Testis (tissue), 5 donors: ENCODE measurements at regions of chr2 and their contacts with region 1.

Region 1: GRCh38 chr2:208939852-208940251 is 484.0 kb upstream of the MAP2 start:
- DNase-seq: no peak
- H3K4me3 ChIP-seq: no peak overlapping the region
- H3K27ac ChIP-seq: no peak overlapping the region
- H3K4me1 ChIP-seq: no peaks in the 10 kb centered on the region
- H3K27me3 ChIP-seq: no peaks in the 10 kb centered on the region
- CTCF ChIP-seq: no peak
- POLR2A ChIP-seq: no peak

Region 2: GRCh38 chr2:208501206-208501799 is 438.5 kb before region 1 on chr2:
- intact Hi-C with region 1: no loop called
- DNase-seq: no peak
- H3K4me3 ChIP-seq: no peak overlapping the region
- H3K27ac ChIP-seq: no peak overlapping the region
- H3K4me1 ChIP-seq: no peaks in the 10 kb centered on the region
- H3K27me3 ChIP-seq: no peaks in the 10 kb centered on the region
- CTCF ChIP-seq: no peak
- POLR2A ChIP-seq: no peak

Region 3: GRCh38 chr2:208657468-208657867 is 282.4 kb before region 1 on chr2:
- intact Hi-C with region 1: no loop called
- DNase-seq: no peak
- H3K4me3 ChIP-seq: no peak overlapping the region
- H3K27ac ChIP-seq: no peak overlapping the region
- H3K4me1 ChIP-seq: no peaks in the 10 kb centered on the region
- H3K27me3 ChIP-seq: no peaks in the 10 kb centered on the region
- CTCF ChIP-seq: no peak
- POLR2A ChIP-seq: no peak

Region 4: GRCh38 chr2:208708486-208708885 is 231.4 kb before region 1 on chr2:
- intact Hi-C with region 1: no loop called
- DNase-seq: no peak
- H3K4me3 ChIP-seq: no peak overlapping the region
- H3K27ac ChIP-seq: no peak overlapping the region
- H3K4me1 ChIP-seq: no peaks in the 10 kb centered on the region
- H3K27me3 ChIP-seq: no peaks in the 10 kb centered on the region
- CTCF ChIP-seq: no peak
- POLR2A ChIP-seq: no peak

Region 5: DNA sequence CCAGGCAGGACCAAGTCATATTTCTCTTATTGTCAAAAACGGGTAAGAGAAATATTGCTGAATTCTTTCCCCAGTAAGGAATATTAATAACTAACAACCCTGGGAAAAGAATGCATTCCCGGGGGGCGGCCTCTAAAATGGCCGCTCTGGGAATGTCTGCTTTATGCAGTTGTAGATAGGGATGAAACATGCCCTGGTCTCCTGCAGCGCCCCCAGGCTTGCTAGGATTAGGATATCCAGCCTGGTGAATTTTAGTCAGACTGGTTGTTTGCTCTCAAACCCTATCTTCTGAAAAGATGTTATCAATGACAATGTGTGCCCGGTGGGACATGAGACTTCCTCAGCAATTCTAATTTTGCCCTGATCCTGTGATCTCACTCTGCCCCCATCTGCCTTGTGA is 85.1 kb before region 1 on chr2:
- intact Hi-C with region 1: no loop called
- DNase-seq: no peak
- H3K4me3 ChIP-seq: no peak overlapping the region
- H3K27ac ChIP-seq: no peak overlapping the region
- H3K4me1 ChIP-seq: no peaks in the 10 kb centered on the region
- H3K27me3 ChIP-seq: no peaks in the 10 kb centered on the region
- CTCF ChIP-seq: no peak
- POLR2A ChIP-seq: no peak

Region 6: GRCh38 chr2:208970070-208970469 is 30.2 kb after region 1 on chr2:
- intact Hi-C with region 1: loop called (anchors 2 kb)
- DNase-seq: no peak
- H3K4me3 ChIP-seq: no peak overlapping the region
- H3K27ac ChIP-seq: no peak overlapping the region
- H3K4me1 ChIP-seq: no peaks in the 10 kb centered on the region
- H3K27me3 ChIP-seq: no peaks in the 10 kb centered on the region
- CTCF ChIP-seq: no peak
- POLR2A ChIP-seq: no peak